MCF 10A (cell line): ENCODE measurements at regions of chrX and their contacts with region 1.

Region 1: GRCh38 chrX:136168929-136169735 is 21.8 kb downstream of the FHL1 start:
- DNase-seq: peak; percentile 56
- H3K4me3 Mint-ChIP-seq: no peak overlapping the region
- H3K27ac Mint-ChIP-seq: no peak overlapping the region
- H3K4me1 Mint-ChIP-seq: peaks cover 16% of the 10 kb centered on the region
- H3K27me3 Mint-ChIP-seq: peaks cover 56% of the 10 kb centered on the region
- CTCF ChIP-seq: no peak

Region 2: GRCh38 chrX:136200466-136200865 is 31.3 kb after region 1 on chrX:
- CTCF ChIA-PET with region 1: interaction called, 6 read pairs
- POLR2A ChIA-PET with region 1: interaction called, 3 read pairs
- intact Hi-C with region 1: loop called (anchors 1 kb)
- DNase-seq: peak; percentile 52
- H3K4me3 Mint-ChIP-seq: no peak overlapping the region
- H3K27ac Mint-ChIP-seq: no peak overlapping the region
- H3K4me1 Mint-ChIP-seq: peaks cover 9% of the 10 kb centered on the region
- H3K27me3 Mint-ChIP-seq: peaks cover 73% of the 10 kb centered on the region
- CTCF ChIP-seq: peak; percentile 34

Region 3: DNA sequence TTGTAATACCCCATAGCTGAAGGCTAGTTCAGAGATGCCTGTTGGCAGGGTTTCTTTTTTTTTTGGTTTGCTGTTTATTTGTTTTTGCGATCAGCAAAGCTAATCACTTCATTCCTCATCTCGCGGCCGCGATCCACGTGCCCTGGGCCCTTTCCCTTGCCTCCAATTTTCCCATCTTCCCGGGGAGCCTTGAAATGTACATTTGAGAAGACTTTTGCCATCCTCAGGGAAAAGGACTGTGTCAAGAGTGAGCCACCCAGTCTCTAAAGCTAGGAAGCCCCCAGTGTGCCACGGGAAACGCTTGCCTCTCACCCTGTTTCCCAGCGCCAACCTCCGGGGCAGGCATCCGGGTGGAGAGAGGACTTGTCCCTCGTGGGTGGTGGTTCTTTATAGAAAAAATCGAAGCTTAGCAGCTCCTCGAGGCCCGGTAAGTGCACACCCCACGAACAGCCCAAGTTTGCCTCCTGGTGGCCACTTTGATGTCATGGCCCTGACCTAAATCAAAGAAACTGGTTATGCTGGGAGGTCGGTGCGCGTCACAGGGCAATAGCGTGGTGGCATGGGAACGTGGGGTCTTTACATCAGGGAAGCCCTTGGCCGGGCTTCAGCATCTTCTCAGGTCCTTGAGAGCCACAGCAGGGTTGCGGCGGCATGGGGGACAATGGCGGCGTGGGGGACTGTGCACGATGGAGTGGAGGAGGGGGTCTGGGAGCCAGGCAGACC is 40.0 kb after region 1 on chrX:
- CTCF ChIA-PET with region 1: interaction called, 13 read pairs
- POLR2A ChIA-PET with region 1: no interaction called
- intact Hi-C with region 1: loop called (anchors 2 kb)
- DNase-seq: peak; percentile 38
- H3K4me3 Mint-ChIP-seq: no peak overlapping the region
- H3K27ac Mint-ChIP-seq: no peak overlapping the region
- H3K4me1 Mint-ChIP-seq: peaks cover 2% of the 10 kb centered on the region
- H3K27me3 Mint-ChIP-seq: peaks cover 72% of the 10 kb centered on the region
- CTCF ChIP-seq: peak; percentile 42

Region 4: DNA sequence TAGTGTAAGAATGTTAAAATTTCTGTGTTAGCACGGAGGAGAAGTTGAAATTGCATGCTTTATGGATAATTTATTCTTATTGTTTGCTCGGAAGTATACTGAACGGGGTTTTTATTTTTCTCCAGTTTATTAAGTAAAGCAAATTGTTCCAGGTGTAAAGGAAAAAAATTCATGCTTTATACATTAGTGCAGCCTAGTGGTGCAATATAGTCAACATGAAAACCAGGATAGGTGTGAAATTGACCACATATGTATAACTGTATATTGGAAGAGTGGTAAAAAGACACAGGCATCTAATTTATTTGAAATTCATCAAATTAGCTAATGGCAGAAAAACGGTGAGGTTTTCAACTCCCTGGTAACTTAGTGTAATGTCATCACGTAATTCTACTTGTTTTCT is 319.6 kb after region 1 on chrX:
- CTCF ChIA-PET with region 1: interaction called, 7 read pairs
- POLR2A ChIA-PET with region 1: no interaction called
- intact Hi-C with region 1: loop called (anchors 5 kb)
- DNase-seq: no peak
- H3K4me3 Mint-ChIP-seq: no peak overlapping the region
- H3K27ac Mint-ChIP-seq: no peak overlapping the region
- H3K4me1 Mint-ChIP-seq: peaks cover 5% of the 10 kb centered on the region
- H3K27me3 Mint-ChIP-seq: peaks cover 89% of the 10 kb centered on the region
- CTCF ChIP-seq: no peak

Region 5: GRCh38 chrX:136577552-136577951 is 408.4 kb after region 1 on chrX:
- CTCF ChIA-PET with region 1: no interaction called
- POLR2A ChIA-PET with region 1: no interaction called
- intact Hi-C with region 1: loop called (anchors 2 kb)
- DNase-seq: peak; percentile 51
- H3K4me3 Mint-ChIP-seq: no peak overlapping the region
- H3K27ac Mint-ChIP-seq: no peak overlapping the region
- H3K4me1 Mint-ChIP-seq: no peaks in the 10 kb centered on the region
- H3K27me3 Mint-ChIP-seq: peaks cover 35% of the 10 kb centered on the region
- CTCF ChIP-seq: peak; percentile 56